Heart left ventricle (tissue), 16 donors: ENCODE measurements at regions of chr7 and their contacts with region 1.

Region 1: DNA sequence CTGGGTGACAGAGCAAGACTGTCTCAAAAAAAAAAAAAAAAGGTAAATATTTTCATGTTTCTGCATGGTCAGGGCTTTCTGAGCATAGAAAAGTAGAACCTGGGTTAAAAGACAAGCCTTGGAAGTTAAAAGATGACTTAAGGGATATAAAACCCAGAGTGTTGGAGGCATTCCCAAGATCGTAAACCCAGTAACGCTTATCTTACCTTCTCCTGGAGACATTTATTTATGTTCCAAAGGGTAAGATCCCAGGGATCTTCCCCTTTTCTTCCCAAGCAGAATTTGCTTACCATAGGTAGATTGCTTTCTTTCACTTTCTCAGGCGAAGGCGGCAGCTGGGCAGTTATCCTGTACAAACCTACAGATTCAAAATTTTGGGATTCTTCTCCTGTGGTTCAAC is 22.2 kb downstream of the SUGCT start:
- DNase-seq: no peak
- ATAC-seq: no peak
- H3K4me3 ChIP-seq: no peak overlapping the region
- H3K27ac ChIP-seq: no peak overlapping the region
- H3K4me1 ChIP-seq: no peaks in the 10 kb centered on the region
- H3K27me3 ChIP-seq: no peaks in the 10 kb centered on the region
- CTCF ChIP-seq: no peak
- POLR2A ChIP-seq: no peak

Region 2: DNA sequence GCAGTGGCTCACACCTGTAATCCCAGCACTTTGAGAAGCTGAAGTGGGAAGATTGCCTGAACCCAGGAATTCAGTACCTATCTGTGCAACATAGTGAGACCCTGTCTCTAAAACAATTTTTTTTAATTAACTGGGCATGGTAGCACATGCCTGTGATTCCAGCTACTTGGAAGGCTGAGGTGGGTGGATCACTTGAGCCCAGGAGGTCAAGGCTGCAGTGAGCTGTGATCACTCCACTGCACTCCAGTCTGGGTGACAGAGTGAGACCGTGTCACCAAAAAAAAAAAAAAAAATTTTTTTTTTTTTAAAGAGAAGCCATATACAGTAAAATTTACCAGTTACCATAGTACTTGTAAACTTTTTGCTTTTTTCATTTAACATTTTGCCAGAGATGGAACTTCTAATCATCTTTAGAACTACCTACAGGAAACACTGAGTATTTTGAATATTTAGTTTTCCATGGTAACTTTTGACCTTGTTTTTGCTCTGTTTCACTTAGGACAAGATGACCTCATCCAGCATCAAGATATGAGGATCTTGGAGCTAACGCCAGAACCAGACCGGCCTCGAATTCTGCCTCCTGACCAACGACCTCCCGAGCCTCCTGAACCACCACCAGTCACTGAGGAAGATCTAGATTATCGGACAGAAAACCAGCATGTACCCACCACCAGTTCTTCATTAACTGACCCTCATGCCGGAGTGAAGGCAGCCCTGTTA is 63.2 kb before region 1 on chr7:
- intact Hi-C with region 1: loop called in 1 of 10 experiments (anchors 10 kb)
- DNase-seq: no peak
- ATAC-seq: peak in 2 of 4 donors; percentile 16 to 39
- H3K4me3 ChIP-seq: no peak overlapping the region
- H3K27ac ChIP-seq: no peak overlapping the region
- H3K4me1 ChIP-seq: peaks cover 0 to 20% (median 2%) of the 10 kb centered on the region in 12 donors
- H3K27me3 ChIP-seq: no peaks in the 10 kb centered on the region
- CTCF ChIP-seq: no peak
- POLR2A ChIP-seq: no peak

Region 3: DNA sequence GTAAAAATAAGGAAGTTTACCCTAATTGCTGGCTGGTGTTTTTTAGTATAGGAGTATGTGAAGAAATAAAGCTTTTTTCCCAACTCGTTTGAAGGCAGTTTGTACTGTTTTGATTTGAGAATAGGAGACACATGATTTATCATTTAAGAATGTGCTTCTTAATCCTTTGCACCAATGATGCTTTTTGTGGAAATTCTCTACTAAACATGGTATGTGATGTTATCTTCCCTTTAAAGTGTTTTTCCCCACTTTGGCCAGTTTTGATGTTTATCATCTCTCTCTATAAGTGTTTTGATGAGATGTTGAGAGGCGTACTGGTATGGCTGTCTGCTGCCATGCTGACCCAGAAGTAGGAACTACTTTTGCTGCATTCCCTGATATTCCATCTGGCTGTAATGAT is 62.9 kb after region 1 on chr7:
- intact Hi-C with region 1: loop called in 1 of 10 experiments (anchors 10 kb)
- DNase-seq: no peak
- ATAC-seq: no peak
- H3K4me3 ChIP-seq: no peak overlapping the region
- H3K27ac ChIP-seq: no peak overlapping the region
- H3K4me1 ChIP-seq: no peaks in the 10 kb centered on the region
- H3K27me3 ChIP-seq: no peaks in the 10 kb centered on the region
- CTCF ChIP-seq: no peak
- POLR2A ChIP-seq: no peak